Activated CD4-positive, alpha-beta memory T cell treated with anti-CD3 and anti-CD28 coated beads for 36 hours (primary cell): ENCODE measurements at regions of chr10 and their contacts with region 1.

Region 1: GRCh38 chr10:14583252-14583651 is 191.4 kb downstream of the FAM107B start:
- DNase-seq: peak; percentile 93
- H3K4me3 Mint-ChIP-seq: peak overlapping the region; percentile 56
- H3K27ac Mint-ChIP-seq: peak overlapping the region; percentile 98
- H3K4me1 Mint-ChIP-seq: peaks cover 84% of the 10 kb centered on the region
- H3K27me3 Mint-ChIP-seq: no peaks in the 10 kb centered on the region

Region 2: GRCh38 chr10:14562218-14563075 is 20.8 kb before region 1 on chr10:
- CTCF ChIA-PET with region 1: interaction called, 10 read pairs
- POLR2A ChIA-PET with region 1: interaction called, 11 read pairs
- intact Hi-C with region 1: loop called (anchors 1 kb)
- DNase-seq: no peak
- H3K4me3 Mint-ChIP-seq: peak overlapping the region; percentile 49
- H3K27ac Mint-ChIP-seq: peak overlapping the region; percentile 90
- H3K4me1 Mint-ChIP-seq: peaks cover 91% of the 10 kb centered on the region
- H3K27me3 Mint-ChIP-seq: no peaks in the 10 kb centered on the region

Region 3: GRCh38 chr10:14571866-14572507 is 11.3 kb before region 1 on chr10:
- CTCF ChIA-PET with region 1: interaction called, 6 read pairs
- POLR2A ChIA-PET with region 1: interaction called, 6 read pairs
- intact Hi-C with region 1: loop called (anchors 1 kb)
- DNase-seq: peak; percentile 78
- H3K4me3 Mint-ChIP-seq: peak overlapping the region; percentile 69
- H3K27ac Mint-ChIP-seq: peak overlapping the region; percentile 90
- H3K4me1 Mint-ChIP-seq: peaks cover 90% of the 10 kb centered on the region
- H3K27me3 Mint-ChIP-seq: no peaks in the 10 kb centered on the region

Region 4: GRCh38 chr10:14617852-14618251 is 34.6 kb after region 1 on chr10:
- CTCF ChIA-PET with region 1: no interaction called
- POLR2A ChIA-PET with region 1: no interaction called
- intact Hi-C with region 1: no loop called
- DNase-seq: no peak
- H3K4me3 Mint-ChIP-seq: no peak overlapping the region
- H3K27ac Mint-ChIP-seq: no peak overlapping the region
- H3K4me1 Mint-ChIP-seq: peaks cover 28% of the 10 kb centered on the region
- H3K27me3 Mint-ChIP-seq: no peaks in the 10 kb centered on the region